ENCODE measurements at regions of chr9 and their contacts with region 1.

Region 1: DNA sequence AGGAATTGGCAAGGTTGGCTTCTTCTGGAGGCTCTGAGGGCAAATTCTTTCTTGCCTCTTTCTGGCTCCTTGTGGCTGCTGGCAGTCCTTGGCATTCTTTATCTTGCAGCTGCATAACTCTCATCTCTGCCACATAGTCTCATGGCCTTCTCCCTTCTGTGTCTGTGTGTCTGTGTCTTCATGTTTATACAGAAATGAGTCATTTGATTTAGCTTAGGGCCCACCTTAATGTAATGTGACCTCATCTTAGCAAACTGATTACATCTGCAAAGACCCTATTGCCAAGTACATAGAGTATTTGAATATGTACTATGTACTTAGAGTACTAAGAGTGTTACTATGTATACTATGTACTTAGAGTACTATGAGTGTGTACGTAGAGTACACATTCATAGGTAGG is 122.5 kb downstream of the RFK start:
- DNase-seq: no peak
- ATAC-seq: no peak
- H3K4me3 ChIP-seq: no peak overlapping the region
- H3K4me3 Mint-ChIP-seq: no peak overlapping the region
- H3K27ac ChIP-seq: no peak overlapping the region
- H3K27ac Mint-ChIP-seq: no peak overlapping the region
- H3K4me1 ChIP-seq: no peaks in the 10 kb centered on the region
- H3K4me1 Mint-ChIP-seq: no peaks in the 10 kb centered on the region
- H3K27me3 ChIP-seq: peaks cover 0 to 7% of the 10 kb centered on the region in 2 experiments
- H3K27me3 Mint-ChIP-seq: peaks cover 0 to 2% of the 10 kb centered on the region in 2 donors

Region 2: GRCh38 chr9:76336027-76336426 is 64.3 kb after region 1 on chr9:
- CTCF ChIA-PET with region 1: no interaction called
- POLR2A ChIA-PET with region 1: no interaction called
- DNase-seq: no peak
- ATAC-seq: no peak
- H3K4me3 ChIP-seq: no peak overlapping the region
- H3K4me3 Mint-ChIP-seq: no peak overlapping the region
- H3K27ac ChIP-seq: no peak overlapping the region
- H3K27ac Mint-ChIP-seq: no peak overlapping the region
- H3K4me1 ChIP-seq: no peaks in the 10 kb centered on the region
- H3K4me1 Mint-ChIP-seq: no peaks in the 10 kb centered on the region
- H3K27me3 ChIP-seq: peaks cover 0 to 7% of the 10 kb centered on the region in 2 experiments
- H3K27me3 Mint-ChIP-seq: peaks cover 12 to 27% of the 10 kb centered on the region in 2 donors

Region 3: DNA sequence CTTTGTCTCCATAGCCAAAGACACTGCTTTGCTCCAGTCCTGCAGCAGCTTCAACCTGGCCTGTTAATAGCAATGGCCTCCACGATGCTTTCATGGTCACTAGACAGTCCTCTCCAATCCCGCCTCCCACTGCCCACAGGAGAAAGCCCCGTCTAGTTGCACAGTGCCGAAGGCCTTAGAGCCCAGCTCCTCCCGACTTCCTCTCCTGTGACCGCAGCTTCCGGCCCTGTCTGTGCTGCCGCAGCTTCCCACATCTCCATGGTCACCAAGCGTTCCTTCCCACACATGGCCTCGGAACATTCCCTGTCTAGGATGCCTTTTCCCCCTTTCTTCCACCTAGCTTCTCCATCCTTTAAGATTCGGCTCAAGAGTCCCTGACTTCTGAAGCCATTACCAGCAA is 515.9 kb after region 1 on chr9:
- CTCF ChIA-PET with region 1: no interaction called
- POLR2A ChIA-PET with region 1: interaction called in 1 of 2 experiments, 10 read pairs
- DNase-seq: no peak
- ATAC-seq: no peak
- H3K4me3 ChIP-seq: no peak overlapping the region
- H3K4me3 Mint-ChIP-seq: no peak overlapping the region
- H3K27ac ChIP-seq: no peak overlapping the region
- H3K27ac Mint-ChIP-seq: no peak overlapping the region
- H3K4me1 ChIP-seq: no peaks in the 10 kb centered on the region
- H3K4me1 Mint-ChIP-seq: no peaks in the 10 kb centered on the region
- H3K27me3 ChIP-seq: no peaks in the 10 kb centered on the region
- H3K27me3 Mint-ChIP-seq: peaks cover 0 to 13% of the 10 kb centered on the region in 2 donors

Measured in T-cell (primary cell).